ENCODE measurements at regions of chr2 and their contacts with region 1.

Region 1: DNA sequence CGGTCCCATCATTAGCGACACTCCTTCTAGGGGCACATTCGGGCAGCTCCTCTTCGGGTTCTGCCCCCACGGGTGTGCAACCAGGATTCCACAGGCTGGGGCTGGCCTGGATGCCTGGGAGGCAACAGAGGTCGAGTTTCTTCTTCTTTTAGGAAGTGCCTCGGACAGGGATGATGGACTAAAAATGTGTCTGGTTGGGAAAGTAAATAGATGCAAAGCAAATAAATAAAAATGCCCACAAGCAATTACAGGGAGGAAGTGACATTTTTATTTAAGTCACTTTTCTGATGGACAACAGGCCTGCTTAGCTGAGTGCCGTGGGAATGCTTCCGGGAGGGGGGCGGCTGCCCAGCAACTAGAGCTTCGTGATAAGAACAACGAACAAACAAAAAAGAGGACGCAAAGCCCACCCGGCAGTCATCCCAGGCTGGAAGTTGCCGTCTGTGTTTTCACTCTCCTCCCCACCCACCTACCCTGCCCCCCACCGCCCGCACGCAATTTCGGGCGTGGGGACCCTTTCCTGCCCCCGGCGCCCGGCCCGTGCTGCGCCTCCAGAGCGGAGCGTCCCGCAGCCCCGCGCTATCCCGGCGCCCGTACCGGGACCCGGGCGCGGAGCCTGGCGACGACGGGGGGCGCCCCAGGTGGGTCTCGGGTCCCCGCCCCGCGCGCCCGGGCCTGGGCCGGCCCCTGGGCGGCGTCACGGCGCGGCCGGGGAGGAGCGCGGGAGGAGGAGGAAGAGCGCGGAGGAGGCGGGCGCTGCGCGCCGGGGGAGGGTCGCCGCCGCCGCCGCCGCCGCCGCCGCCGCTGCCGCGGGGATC is 412 bp upstream of the NCK2 start:
- DNase-seq: peak; percentile 58 to 79
- H3K4me3 ChIP-seq: peak overlapping the region; percentile 67
- H3K4me3 Mint-ChIP-seq: peak overlapping the region; percentile 80
- H3K27ac Mint-ChIP-seq: peak overlapping the region; percentile 85
- H3K4me1 ChIP-seq: peaks cover 20% of the 10 kb centered on the region
- H3K4me1 Mint-ChIP-seq: peaks cover 21% of the 10 kb centered on the region
- H3K27me3 ChIP-seq: no peaks in the 10 kb centered on the region
- H3K27me3 Mint-ChIP-seq: no peaks in the 10 kb centered on the region
- CTCF ChIP-seq: no peak

Region 2: GRCh38 chr2:105576440-105577252 is 167.7 kb before region 1 on chr2:
- CTCF ChIA-PET with region 1: interaction called, 8 read pairs
- POLR2A ChIA-PET with region 1: no interaction called
- intact Hi-C with region 1: loop called (anchors 1 kb)
- DNase-seq: peak in 1 of 2 experiments; percentile 45
- H3K4me3 ChIP-seq: no peak overlapping the region
- H3K4me3 Mint-ChIP-seq: peak overlapping the region; percentile 30
- H3K27ac Mint-ChIP-seq: peak overlapping the region; percentile 90
- H3K4me1 ChIP-seq: peaks cover 30% of the 10 kb centered on the region
- H3K4me1 Mint-ChIP-seq: peaks cover 36% of the 10 kb centered on the region
- H3K27me3 ChIP-seq: no peaks in the 10 kb centered on the region
- H3K27me3 Mint-ChIP-seq: no peaks in the 10 kb centered on the region
- CTCF ChIP-seq: peak; percentile 54 to 71

Region 3: GRCh38 chr2:105712981-105713596 is 31.2 kb before region 1 on chr2:
- CTCF ChIA-PET with region 1: no interaction called
- POLR2A ChIA-PET with region 1: no interaction called
- intact Hi-C with region 1: loop called (anchors 2 kb)
- DNase-seq: peak in 1 of 2 experiments; percentile 18
- H3K4me3 ChIP-seq: no peak overlapping the region
- H3K4me3 Mint-ChIP-seq: peak overlapping the region; percentile 36
- H3K27ac Mint-ChIP-seq: peak overlapping the region; percentile 75
- H3K4me1 ChIP-seq: peaks cover 49% of the 10 kb centered on the region
- H3K4me1 Mint-ChIP-seq: peaks cover 61% of the 10 kb centered on the region
- H3K27me3 ChIP-seq: no peaks in the 10 kb centered on the region
- H3K27me3 Mint-ChIP-seq: no peaks in the 10 kb centered on the region
- CTCF ChIP-seq: no peak

Region 4: GRCh38 chr2:105731511-105731910 is 12.8 kb before region 1 on chr2:
- CTCF ChIA-PET with region 1: interaction called, 3 read pairs
- POLR2A ChIA-PET with region 1: no interaction called
- intact Hi-C with region 1: loop called (anchors 2 kb)
- DNase-seq: no peak
- H3K4me3 ChIP-seq: no peak overlapping the region
- H3K4me3 Mint-ChIP-seq: no peak overlapping the region
- H3K27ac Mint-ChIP-seq: peak overlapping the region; percentile 18
- H3K4me1 ChIP-seq: peaks cover 23% of the 10 kb centered on the region
- H3K4me1 Mint-ChIP-seq: peaks cover 32% of the 10 kb centered on the region
- H3K27me3 ChIP-seq: no peaks in the 10 kb centered on the region
- H3K27me3 Mint-ChIP-seq: no peaks in the 10 kb centered on the region
- CTCF ChIP-seq: no peak

Region 5: GRCh38 chr2:105769504-105769903 is 25.2 kb after region 1 on chr2:
- CTCF ChIA-PET with region 1: no interaction called
- POLR2A ChIA-PET with region 1: interaction called, 4 read pairs
- intact Hi-C with region 1: loop called (anchors 1 kb)
- DNase-seq: peak in 1 of 2 experiments; percentile 52
- H3K4me3 ChIP-seq: no peak overlapping the region
- H3K4me3 Mint-ChIP-seq: no peak overlapping the region
- H3K27ac Mint-ChIP-seq: peak overlapping the region; percentile 75
- H3K4me1 ChIP-seq: peaks cover 9% of the 10 kb centered on the region
- H3K4me1 Mint-ChIP-seq: peaks cover 28% of the 10 kb centered on the region
- H3K27me3 ChIP-seq: no peaks in the 10 kb centered on the region
- H3K27me3 Mint-ChIP-seq: no peaks in the 10 kb centered on the region
- CTCF ChIP-seq: peak; percentile 32 to 46

Region 6: GRCh38 chr2:105800036-105800713 is 55.9 kb after region 1 on chr2:
- CTCF ChIA-PET with region 1: no interaction called
- POLR2A ChIA-PET with region 1: no interaction called
- intact Hi-C with region 1: loop called (anchors 2 kb)
- DNase-seq: no peak
- H3K4me3 ChIP-seq: no peak overlapping the region
- H3K4me3 Mint-ChIP-seq: no peak overlapping the region
- H3K27ac Mint-ChIP-seq: peak overlapping the region; percentile 53
- H3K4me1 ChIP-seq: peaks cover 46% of the 10 kb centered on the region
- H3K4me1 Mint-ChIP-seq: peaks cover 44% of the 10 kb centered on the region
- H3K27me3 ChIP-seq: no peaks in the 10 kb centered on the region
- H3K27me3 Mint-ChIP-seq: no peaks in the 10 kb centered on the region
- CTCF ChIP-seq: no peak

Measured in Caco-2 (cell line).